ENCODE measurements at regions of chr15 and their contacts with region 1.

Region 1: DNA sequence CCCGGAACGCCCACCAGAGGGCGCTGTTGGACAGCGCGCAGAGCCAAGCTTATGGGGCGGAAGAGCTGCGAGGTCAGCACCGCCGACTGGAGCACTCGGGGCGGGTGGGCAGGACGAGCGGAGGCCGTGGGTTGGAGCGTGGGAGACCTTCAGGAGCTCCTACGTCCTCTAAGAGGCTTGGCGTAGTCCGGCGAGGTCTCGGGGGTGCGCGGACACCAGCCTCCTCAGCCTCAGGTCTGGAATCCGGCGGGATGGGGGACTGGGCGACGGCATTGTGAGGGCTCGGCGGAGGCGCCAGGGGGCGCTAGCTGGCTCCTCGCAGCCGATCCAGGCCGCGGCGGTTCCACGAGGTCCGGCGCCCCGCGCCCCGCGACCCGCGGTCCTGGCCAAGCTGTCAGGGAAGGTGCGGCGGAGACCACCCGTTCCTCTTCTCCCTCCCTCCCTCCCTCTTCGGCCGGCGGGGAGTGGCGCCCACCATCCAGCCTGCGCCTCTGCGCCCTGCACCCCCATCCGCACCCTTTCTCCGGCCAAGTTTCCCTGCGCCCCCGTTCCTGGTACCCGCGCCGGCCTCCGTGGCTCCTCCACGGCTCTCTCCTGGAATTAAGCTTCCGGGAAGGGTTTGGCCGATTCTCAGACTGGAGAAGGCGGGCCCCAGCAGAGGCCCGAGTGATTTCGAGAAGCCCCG is 24.3 kb upstream of the POLG start:
- DNase-seq: peak; percentile 95

Region 2: GRCh38 chr15:89335289-89336041 is 23.4 kb before region 1 on chr15:
- intact Hi-C with region 1: no loop called
- DNase-seq: no peak

Region 3: GRCh38 chr15:89430530-89431341 is 71.8 kb after region 1 on chr15:
- intact Hi-C with region 1: loop called (anchors 2 to 5 kb)
- DNase-seq: peak; percentile 96

Region 4: DNA sequence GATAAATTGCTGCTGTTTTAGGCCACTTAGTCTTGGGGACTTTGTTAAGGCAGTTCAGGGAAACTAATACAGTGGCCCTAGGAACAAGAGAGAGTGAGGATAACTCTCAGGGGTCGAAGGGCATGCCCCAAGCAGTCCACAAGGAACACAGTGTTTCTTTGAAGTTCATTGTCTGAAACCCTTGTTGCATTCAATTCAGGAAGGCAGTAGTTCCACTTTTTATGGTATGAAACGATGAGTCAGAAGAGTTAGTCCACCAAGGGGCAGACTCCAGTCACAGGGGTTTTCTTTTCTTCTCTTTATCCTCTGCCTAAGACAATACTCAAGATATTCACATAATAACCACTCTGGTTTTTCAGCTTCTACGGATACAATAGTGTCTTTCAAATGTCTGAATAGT is 192.6 kb after region 1 on chr15:
- intact Hi-C with region 1: loop called in 1 of 2 experiments (anchors 5 kb)
- DNase-seq: no peak